Caki2 (cell line): ENCODE measurements at regions of chr7 and their contacts with region 1.

Region 1: DNA sequence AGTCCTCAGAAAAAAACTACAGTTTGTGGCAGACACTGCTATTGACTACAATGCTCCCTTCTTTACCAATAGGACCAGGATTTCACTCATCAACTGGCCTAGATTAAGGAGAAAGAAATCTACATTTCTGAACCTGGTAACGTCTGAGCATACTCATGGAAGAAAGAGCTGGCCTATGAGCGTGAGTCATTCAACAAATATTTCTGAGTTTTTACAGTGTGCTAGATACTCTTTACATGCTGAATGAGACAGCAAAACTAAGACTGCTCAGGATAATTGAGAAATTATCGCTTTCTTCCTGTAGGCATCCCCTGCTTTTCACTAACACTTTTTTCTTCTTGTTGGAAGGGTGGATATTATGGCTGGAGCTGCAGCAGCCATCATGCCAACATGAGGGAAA is 609.7 kb downstream of the TNS3 start:
- DNase-seq: peak; percentile 79

Region 2: GRCh38 chr7:46776790-46777189 is 195.4 kb before region 1 on chr7:
- in situ Hi-C with region 1: loop called (anchors 25 kb)
- DNase-seq: no peak